Activated CD4-positive, alpha-beta T cell treated with anti-CD3 and anti-CD28 coated beads for 36 hours (primary cell): ENCODE measurements at regions of chr2 and their contacts with region 1.

Region 1: GRCh38 chr2:231612179-231613053 is 19.8 kb downstream of the TEX44 start:
- DNase-seq: peak; percentile 99
- ATAC-seq: peak; percentile 67
- H3K4me3 Mint-ChIP-seq: peak overlapping the region; percentile 77
- H3K27ac Mint-ChIP-seq: peak overlapping the region; percentile 98
- H3K4me1 Mint-ChIP-seq: peaks cover 52% of the 10 kb centered on the region
- H3K27me3 Mint-ChIP-seq: no peaks in the 10 kb centered on the region

Region 2: GRCh38 chr2:231463698-231464575 is 148.5 kb before region 1 on chr2 and contains the start of gene NCL:
- CTCF ChIA-PET with region 1: no interaction called
- POLR2A ChIA-PET with region 1: interaction called, 12 read pairs
- intact Hi-C with region 1: loop called in 1 of 2 experiments (anchors 1 kb)
- DNase-seq: peak; percentile 92
- ATAC-seq: peak; percentile 93
- H3K4me3 Mint-ChIP-seq: peak within 1 kb of the TSS; percentile 98
- H3K27ac Mint-ChIP-seq: peak within 1 kb of the TSS; percentile 99
- H3K4me1 Mint-ChIP-seq: peaks cover 42% of the 10 kb centered on the region
- H3K27me3 Mint-ChIP-seq: no peaks in the 10 kb centered on the region
- total RNA-seq, gene NCL: 1,311 to 1,332 TPM

Region 3: DNA sequence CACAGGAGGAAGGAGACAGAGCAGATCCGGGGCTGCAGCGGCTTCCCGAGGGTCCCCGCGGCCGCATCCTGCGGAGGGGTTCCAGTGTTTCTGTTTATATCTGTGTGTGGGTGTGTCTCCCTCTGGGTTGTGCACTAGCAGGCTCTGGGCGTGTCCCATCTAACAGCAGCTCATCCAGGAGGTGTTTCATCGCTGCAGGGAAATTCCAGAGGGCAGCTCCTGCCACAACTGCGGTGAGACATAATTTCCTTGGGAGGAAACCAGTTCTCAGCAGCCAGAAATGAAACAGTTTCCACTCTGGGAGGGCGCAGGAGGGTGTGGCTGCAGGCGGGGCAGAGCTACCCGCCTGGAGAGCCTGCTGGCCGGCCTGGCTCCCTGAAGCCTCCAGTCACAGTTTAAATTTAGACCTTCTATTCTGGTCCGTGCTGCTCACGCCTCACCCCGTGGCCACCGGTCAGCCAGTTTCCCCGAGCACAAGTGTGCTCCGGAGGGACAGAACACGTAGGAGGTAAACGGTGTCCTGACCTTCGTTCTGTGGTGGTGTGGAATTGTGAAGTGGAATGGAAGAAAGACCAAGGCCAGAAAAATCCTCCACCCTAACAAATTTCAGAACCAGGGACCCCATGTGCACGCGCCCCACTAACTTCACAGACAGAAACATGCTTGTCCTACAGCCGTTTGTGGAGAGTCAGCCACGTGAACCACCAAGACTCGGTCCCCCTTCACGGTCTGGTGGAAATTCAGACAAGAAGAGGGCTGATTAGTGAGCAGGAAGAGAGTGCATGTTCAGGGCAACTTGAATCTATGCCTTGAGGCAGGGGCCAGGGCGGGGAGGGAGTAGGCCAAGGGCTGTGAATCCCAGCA is 30.4 kb after region 1 on chr2:
- CTCF ChIA-PET with region 1: interaction called, 9 read pairs
- POLR2A ChIA-PET with region 1: interaction called, 6 read pairs
- intact Hi-C with region 1: loop called (anchors 1 to 2 kb)
- DNase-seq: peak; percentile 85
- ATAC-seq: peak; percentile 93
- H3K4me3 Mint-ChIP-seq: peak overlapping the region; percentile 65
- H3K27ac Mint-ChIP-seq: peak overlapping the region; percentile 88
- H3K4me1 Mint-ChIP-seq: peaks cover 13% of the 10 kb centered on the region
- H3K27me3 Mint-ChIP-seq: no peaks in the 10 kb centered on the region

Region 4: GRCh38 chr2:231701456-231702373 is 89.3 kb after region 1 on chr2:
- CTCF ChIA-PET with region 1: interaction called, 26 read pairs
- POLR2A ChIA-PET with region 1: interaction called, 104 read pairs
- intact Hi-C with region 1: no loop called
- DNase-seq: no peak
- ATAC-seq: no peak
- H3K4me3 Mint-ChIP-seq: no peak overlapping the region
- H3K27ac Mint-ChIP-seq: no peak overlapping the region
- H3K4me1 Mint-ChIP-seq: peaks cover 10% of the 10 kb centered on the region
- H3K27me3 Mint-ChIP-seq: no peaks in the 10 kb centered on the region

Region 5: DNA sequence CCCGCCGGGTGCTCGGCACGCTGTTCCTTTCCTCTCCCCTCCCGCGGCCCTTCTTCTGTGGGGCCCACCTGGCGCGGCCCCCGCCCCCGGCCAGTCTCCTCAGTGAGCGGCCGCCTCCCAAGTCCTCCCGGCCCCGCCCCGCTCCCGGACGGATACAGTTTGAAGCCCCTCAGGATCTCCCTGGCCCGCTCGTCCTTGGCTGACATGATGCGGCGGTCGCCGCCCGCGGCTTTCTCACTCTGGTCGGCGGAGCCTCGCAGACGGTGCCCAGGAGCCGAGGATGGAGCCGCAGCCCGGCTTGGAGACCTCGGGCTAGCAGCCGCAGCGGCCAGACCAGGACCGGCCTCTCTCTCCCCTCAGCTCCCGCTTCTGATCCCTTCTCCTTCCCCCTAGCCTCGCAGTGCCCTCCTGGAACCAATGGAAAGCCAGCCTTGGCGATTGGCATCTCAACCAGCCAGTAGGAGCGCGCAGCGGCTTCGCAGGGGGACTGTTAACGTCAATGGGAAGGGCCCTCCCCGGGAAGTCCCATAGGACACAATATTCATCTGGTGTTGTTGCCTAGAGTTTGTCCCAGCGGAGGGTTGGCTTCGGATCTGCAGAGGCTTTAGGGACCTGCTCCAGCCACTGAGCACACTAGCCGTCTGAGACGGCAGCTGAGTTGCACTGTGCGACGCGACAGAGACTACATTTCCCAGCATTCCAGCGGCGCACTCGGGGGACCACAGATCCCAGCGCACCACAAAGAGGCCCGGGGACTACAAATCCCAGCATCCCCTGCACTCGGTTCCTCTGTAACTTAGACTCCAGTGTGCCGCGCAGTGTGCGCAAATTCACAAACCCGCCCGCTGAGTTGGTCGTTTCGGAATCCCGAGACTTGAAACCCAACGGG is 168.7 kb after region 1 on chr2 and contains the start of gene PDE6D:
- CTCF ChIA-PET with region 1: no interaction called
- POLR2A ChIA-PET with region 1: no interaction called
- intact Hi-C with region 1: loop called (anchors 1 kb)
- DNase-seq: peak; percentile 97
- ATAC-seq: peak; percentile 93
- H3K4me3 Mint-ChIP-seq: peak within 1 kb of the TSS; percentile 83
- H3K27ac Mint-ChIP-seq: peak within 1 kb of the TSS; percentile 92
- H3K4me1 Mint-ChIP-seq: peaks cover 44% of the 10 kb centered on the region
- H3K27me3 Mint-ChIP-seq: no peaks in the 10 kb centered on the region
- total RNA-seq, gene PDE6D: 28.0 to 31.1 TPM

Region 6: GRCh38 chr2:232026910-232027309 is 414.5 kb after region 1 on chr2:
- CTCF ChIA-PET with region 1: no interaction called
- POLR2A ChIA-PET with region 1: no interaction called
- intact Hi-C with region 1: loop called in 1 of 2 experiments (anchors 5 kb)
- DNase-seq: no peak
- ATAC-seq: peak; percentile 95
- H3K4me3 Mint-ChIP-seq: no peak overlapping the region
- H3K27ac Mint-ChIP-seq: peak overlapping the region; percentile 48
- H3K4me1 Mint-ChIP-seq: peaks cover 29% of the 10 kb centered on the region
- H3K27me3 Mint-ChIP-seq: no peaks in the 10 kb centered on the region